Heart right ventricle (tissue), 16 donors: ENCODE measurements at regions of chr20 and their contacts with region 1.

Region 1: GRCh38 chr20:1313236-1313964 is 15.5 kb downstream of the SDCBP2 start:
- DNase-seq: peak; percentile 79 to 85
- ATAC-seq: peak; percentile 74 to 97 (median 90)
- H3K4me3 ChIP-seq: peak overlapping the region in 9 of 10 donors; percentile 2 to 40 (median 33)
- H3K27ac ChIP-seq: peak overlapping the region in 5 of 10 donors; percentile 0 to 33 (median 28)
- H3K4me1 ChIP-seq: peaks cover 0 to 18% (median 13%) of the 10 kb centered on the region in 9 donors
- H3K27me3 ChIP-seq: no peaks in the 10 kb centered on the region
- CTCF ChIP-seq: peak; percentile 98 to 100 (median 99)

Region 2: GRCh38 chr20:1437235-1437904 is 124.0 kb after region 1 on chr20:
- intact Hi-C with region 1: loop called (anchors 1 to 5 kb)
- DNase-seq: peak; percentile 72 to 76
- ATAC-seq: peak in 6 of 8 donors; percentile 57 to 80 (median 72)
- H3K4me3 ChIP-seq: no peak overlapping the region
- H3K27ac ChIP-seq: no peak overlapping the region
- H3K4me1 ChIP-seq: peaks cover 0 to 24% (median 0%) of the 10 kb centered on the region in 9 donors
- H3K27me3 ChIP-seq: no peaks in the 10 kb centered on the region
- CTCF ChIP-seq: peak; percentile 65 to 91 (median 85)

Region 3: GRCh38 chr20:1466211-1467081 is 153.0 kb after region 1 on chr20 and contains the start of gene NSFL1C:
- intact Hi-C with region 1: loop called in 1 of 10 experiments (anchors 1 kb)
- DNase-seq: peak; percentile 94 to 96
- ATAC-seq: peak; percentile 96 to 99 (median 98)
- H3K4me3 ChIP-seq: peak within 1 kb of the TSS; percentile 79 to 99 (median 95)
- H3K27ac ChIP-seq: peak within 1 kb of the TSS; percentile 73 to 96 (median 92)
- H3K4me1 ChIP-seq: peaks cover 0 to 67% (median 43%) of the 10 kb centered on the region in 9 donors
- H3K27me3 ChIP-seq: no peaks in the 10 kb centered on the region
- CTCF ChIP-seq: peak; percentile 87 to 100 (median 99)
- total RNA-seq, gene NSFL1C: 54.6 to 75.6 (median 63.8) TPM